CD4-positive, alpha-beta T cell (primary cell): ENCODE measurements at regions of chr9 and their contacts with region 1.

Region 1: GRCh38 chr9:120842690-120843499 is at the start of gene PSMD5:
- DNase-seq: peak; percentile 89 to 99 (median 92)
- ATAC-seq: peak; percentile 86
- H3K4me3 ChIP-seq: peak within 1 kb of the TSS; percentile 93
- H3K4me3 Mint-ChIP-seq: peak within 1 kb of the TSS; percentile 96
- H3K27ac ChIP-seq: peak within 1 kb of the TSS; percentile 93 to 98
- H3K27ac Mint-ChIP-seq: peak within 1 kb of the TSS; percentile 99
- H3K4me1 ChIP-seq: peaks cover 63% of the 10 kb centered on the region
- H3K4me1 Mint-ChIP-seq: peaks cover 79% of the 10 kb centered on the region
- H3K27me3 ChIP-seq: no peaks in the 10 kb centered on the region
- H3K27me3 Mint-ChIP-seq: no peaks in the 10 kb centered on the region
- CTCF ChIP-seq: no peak
- total RNA-seq, gene PSMD5: 35.4 to 44.3 TPM

Region 2: GRCh38 chr9:120714088-120714845 is 128.6 kb before region 1 on chr9 and contains the start of gene MEGF9:
- CTCF ChIA-PET with region 1: no interaction called
- POLR2A ChIA-PET with region 1: interaction called, 3 read pairs
- intact Hi-C with region 1: loop called in 1 of 2 experiments (anchors 10 kb)
- DNase-seq: peak; percentile 88 to 98 (median 94)
- ATAC-seq: peak; percentile 93
- H3K4me3 ChIP-seq: peak within 1 kb of the TSS; percentile 82
- H3K4me3 Mint-ChIP-seq: peak within 1 kb of the TSS; percentile 90
- H3K27ac ChIP-seq: peak within 1 kb of the TSS; percentile 56 to 60
- H3K27ac Mint-ChIP-seq: peak within 1 kb of the TSS; percentile 79
- H3K4me1 ChIP-seq: peaks cover 35% of the 10 kb centered on the region
- H3K4me1 Mint-ChIP-seq: peaks cover 39% of the 10 kb centered on the region
- H3K27me3 ChIP-seq: no peaks in the 10 kb centered on the region
- H3K27me3 Mint-ChIP-seq: no peaks in the 10 kb centered on the region
- CTCF ChIP-seq: no peak
- total RNA-seq, gene MEGF9: 4.0 to 4.5 TPM

Region 3: GRCh38 chr9:120868676-120869359 is 25.9 kb after region 1 on chr9:
- CTCF ChIA-PET with region 1: interaction called, 5 read pairs
- POLR2A ChIA-PET with region 1: interaction called, 24 read pairs
- intact Hi-C with region 1: loop called (anchors 1 to 2 kb)
- DNase-seq: peak; percentile 95 to 99 (median 97)
- ATAC-seq: peak; percentile 84
- H3K4me3 ChIP-seq: peak overlapping the region; percentile 73
- H3K4me3 Mint-ChIP-seq: peak overlapping the region; percentile 94
- H3K27ac ChIP-seq: peak overlapping the region; percentile 71 to 80
- H3K27ac Mint-ChIP-seq: peak overlapping the region; percentile 92
- H3K4me1 ChIP-seq: peaks cover 42% of the 10 kb centered on the region
- H3K4me1 Mint-ChIP-seq: peaks cover 29% of the 10 kb centered on the region
- H3K27me3 ChIP-seq: no peaks in the 10 kb centered on the region
- H3K27me3 Mint-ChIP-seq: no peaks in the 10 kb centered on the region
- CTCF ChIP-seq: peak; percentile 72

Region 4: GRCh38 chr9:120904061-120904977 is 61.4 kb after region 1 on chr9:
- CTCF ChIA-PET with region 1: no interaction called
- POLR2A ChIA-PET with region 1: interaction called, 12 read pairs
- intact Hi-C with region 1: no loop called
- DNase-seq: peak; percentile 54 to 94 (median 70)
- ATAC-seq: peak; percentile 91
- H3K4me3 ChIP-seq: no peak overlapping the region
- H3K4me3 Mint-ChIP-seq: peak overlapping the region; percentile 35
- H3K27ac ChIP-seq: peak overlapping the region; percentile 92 to 93
- H3K27ac Mint-ChIP-seq: peak overlapping the region; percentile 99
- H3K4me1 ChIP-seq: peaks cover 80% of the 10 kb centered on the region
- H3K4me1 Mint-ChIP-seq: peaks cover 88% of the 10 kb centered on the region
- H3K27me3 ChIP-seq: no peaks in the 10 kb centered on the region
- H3K27me3 Mint-ChIP-seq: no peaks in the 10 kb centered on the region
- CTCF ChIP-seq: no peak

Region 5: DNA sequence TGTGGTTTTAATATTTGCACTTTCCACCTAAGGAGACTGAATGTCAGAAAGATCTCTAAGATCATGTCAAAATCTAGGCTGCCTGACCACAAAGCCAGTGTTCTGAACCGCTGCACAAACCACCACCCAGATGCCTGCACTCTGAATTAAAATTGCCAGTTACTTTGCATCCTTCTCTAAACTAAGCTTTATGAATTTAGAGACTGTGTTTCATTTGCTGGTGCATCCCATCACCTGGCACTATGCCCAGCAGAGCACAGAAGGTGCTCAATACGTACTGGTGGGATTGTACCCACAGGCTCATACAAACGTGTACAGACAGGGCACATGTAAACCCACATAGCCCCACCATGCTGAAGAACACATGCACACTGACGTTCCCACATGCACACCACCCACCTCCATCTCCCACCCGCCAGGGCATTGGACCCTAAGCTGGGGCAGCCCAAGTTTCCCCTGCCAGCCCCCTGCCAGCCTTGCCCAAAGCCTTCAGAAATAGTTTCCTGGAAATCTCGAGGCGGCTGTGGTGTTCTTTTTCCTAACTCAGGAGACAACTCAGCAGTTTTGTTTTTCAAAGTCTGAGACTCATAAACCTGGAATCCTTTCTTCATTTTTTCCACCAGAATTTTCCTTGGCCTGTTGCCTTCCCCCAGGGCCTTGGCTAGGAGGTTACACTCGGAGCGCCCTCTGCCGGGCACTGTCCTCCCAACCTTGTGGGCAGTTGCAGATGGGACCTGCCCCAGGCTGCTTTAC is 93.3 kb after region 1 on chr9:
- CTCF ChIA-PET with region 1: interaction called, 15 read pairs
- POLR2A ChIA-PET with region 1: interaction called, 37 read pairs
- intact Hi-C with region 1: loop called in 1 of 2 experiments (anchors 1 kb)
- DNase-seq: peak; percentile 79 to 95 (median 88)
- ATAC-seq: peak; percentile 64
- H3K4me3 ChIP-seq: no peak overlapping the region
- H3K4me3 Mint-ChIP-seq: peak overlapping the region; percentile 46
- H3K27ac ChIP-seq: peak overlapping the region; percentile 45 to 100
- H3K27ac Mint-ChIP-seq: peak overlapping the region; percentile 100
- H3K4me1 ChIP-seq: peaks cover 56% of the 10 kb centered on the region
- H3K4me1 Mint-ChIP-seq: peaks cover 57% of the 10 kb centered on the region
- H3K27me3 ChIP-seq: no peaks in the 10 kb centered on the region
- H3K27me3 Mint-ChIP-seq: no peaks in the 10 kb centered on the region
- CTCF ChIP-seq: peak; percentile 94

Region 6: GRCh38 chr9:121121582-121122087 is 278.7 kb after region 1 on chr9:
- CTCF ChIA-PET with region 1: interaction called, 4 read pairs
- POLR2A ChIA-PET with region 1: interaction called, 9 read pairs
- intact Hi-C with region 1: loop called (anchors 5 kb)
- DNase-seq: peak; percentile 91 to 98 (median 96)
- ATAC-seq: peak; percentile 95
- H3K4me3 ChIP-seq: peak overlapping the region; percentile 59
- H3K4me3 Mint-ChIP-seq: peak overlapping the region; percentile 83
- H3K27ac ChIP-seq: peak overlapping the region; percentile 49 to 72
- H3K27ac Mint-ChIP-seq: peak overlapping the region; percentile 88
- H3K4me1 ChIP-seq: peaks cover 22% of the 10 kb centered on the region
- H3K4me1 Mint-ChIP-seq: peaks cover 54% of the 10 kb centered on the region
- H3K27me3 ChIP-seq: no peaks in the 10 kb centered on the region
- H3K27me3 Mint-ChIP-seq: no peaks in the 10 kb centered on the region
- CTCF ChIP-seq: no peak

Region 7: GRCh38 chr9:121246821-121247561 is 404.1 kb after region 1 on chr9:
- CTCF ChIA-PET with region 1: no interaction called
- POLR2A ChIA-PET with region 1: no interaction called
- intact Hi-C with region 1: no loop called
- DNase-seq: no peak
- ATAC-seq: no peak
- H3K4me3 ChIP-seq: no peak overlapping the region
- H3K4me3 Mint-ChIP-seq: no peak overlapping the region
- H3K27ac ChIP-seq: no peak overlapping the region
- H3K27ac Mint-ChIP-seq: no peak overlapping the region
- H3K4me1 ChIP-seq: no peaks in the 10 kb centered on the region
- H3K4me1 Mint-ChIP-seq: no peaks in the 10 kb centered on the region
- H3K27me3 ChIP-seq: no peaks in the 10 kb centered on the region
- H3K27me3 Mint-ChIP-seq: no peaks in the 10 kb centered on the region
- CTCF ChIP-seq: no peak